Mammary epithelial cell (primary cell): ENCODE measurements at regions of chr22 and their contacts with region 1.

Region 1: DNA sequence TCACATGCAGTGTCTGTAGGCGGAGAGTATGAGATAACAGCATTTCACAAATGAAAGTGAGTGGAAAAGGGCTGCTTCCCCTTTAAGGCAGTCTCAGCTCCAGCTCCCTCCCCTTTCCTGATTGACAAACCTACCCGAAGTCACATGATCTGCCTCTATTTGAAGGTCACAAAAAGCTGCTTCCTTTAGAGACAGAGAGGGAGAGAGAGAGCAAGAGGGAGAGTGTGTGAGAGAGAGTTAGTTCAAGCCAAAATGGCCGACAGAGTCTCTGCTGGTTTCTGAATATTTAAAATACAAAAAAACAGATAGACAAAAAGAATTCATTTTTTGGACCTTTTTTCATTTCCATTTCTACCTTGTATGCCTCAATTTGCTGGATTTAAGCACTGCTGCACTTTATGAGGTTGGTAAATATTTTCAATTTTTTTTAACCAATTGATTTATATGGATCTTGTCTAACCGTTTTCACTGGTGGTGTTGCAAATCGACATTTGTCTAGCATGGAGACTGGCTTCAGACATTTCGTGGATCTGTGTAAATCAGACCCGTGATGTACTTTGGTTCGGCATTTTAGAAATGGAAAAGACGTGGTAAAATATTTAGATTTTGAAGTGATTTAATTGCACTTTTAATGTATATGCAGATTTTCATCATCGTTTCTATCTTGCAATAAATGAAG is at the start of gene TNRC6B:
- DNase-seq: peak; percentile 97
- H3K4me3 ChIP-seq: peak within 1 kb of the TSS; percentile 53 to 100 (median 100)
- H3K27ac ChIP-seq: peak within 1 kb of the TSS; percentile 90
- H3K4me1 ChIP-seq: peaks cover 26% of the 10 kb centered on the region
- H3K27me3 ChIP-seq: no peaks in the 10 kb centered on the region
- CTCF ChIP-seq: no peak
- total RNA-seq, gene TNRC6B: 25.2 to 27.3 TPM

Region 2: DNA sequence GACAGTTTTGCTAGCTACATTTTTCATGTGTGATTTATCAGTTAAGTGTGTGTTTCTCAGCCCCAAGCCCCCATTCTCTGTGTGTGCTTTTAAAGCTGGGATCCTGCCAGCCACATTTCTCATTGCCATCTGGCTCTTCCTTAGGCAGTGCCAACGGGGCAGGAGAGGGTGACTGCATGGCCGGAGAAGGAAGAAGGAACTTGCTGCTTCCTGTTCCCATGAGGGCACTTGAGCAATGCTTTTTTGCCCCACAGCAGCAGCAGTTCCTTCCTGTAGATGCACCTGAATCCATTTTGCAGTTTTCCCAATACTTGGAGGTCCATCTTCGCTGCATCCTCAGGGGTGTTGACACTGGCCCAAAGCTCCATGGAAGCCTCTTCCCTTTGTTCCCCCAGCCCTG is 37.4 kb after region 1 on chr22:
- CTCF ChIA-PET with region 1: no interaction called
- dilution Hi-C with region 1: no loop called
- in situ Hi-C with region 1: no loop called
- intact Hi-C with region 1: no loop called
- DNase-seq: no peak
- H3K4me3 ChIP-seq: no peak overlapping the region
- H3K27ac ChIP-seq: no peak overlapping the region
- H3K4me1 ChIP-seq: peaks cover 9% of the 10 kb centered on the region
- H3K27me3 ChIP-seq: no peaks in the 10 kb centered on the region
- CTCF ChIP-seq: no peak

Region 3: DNA sequence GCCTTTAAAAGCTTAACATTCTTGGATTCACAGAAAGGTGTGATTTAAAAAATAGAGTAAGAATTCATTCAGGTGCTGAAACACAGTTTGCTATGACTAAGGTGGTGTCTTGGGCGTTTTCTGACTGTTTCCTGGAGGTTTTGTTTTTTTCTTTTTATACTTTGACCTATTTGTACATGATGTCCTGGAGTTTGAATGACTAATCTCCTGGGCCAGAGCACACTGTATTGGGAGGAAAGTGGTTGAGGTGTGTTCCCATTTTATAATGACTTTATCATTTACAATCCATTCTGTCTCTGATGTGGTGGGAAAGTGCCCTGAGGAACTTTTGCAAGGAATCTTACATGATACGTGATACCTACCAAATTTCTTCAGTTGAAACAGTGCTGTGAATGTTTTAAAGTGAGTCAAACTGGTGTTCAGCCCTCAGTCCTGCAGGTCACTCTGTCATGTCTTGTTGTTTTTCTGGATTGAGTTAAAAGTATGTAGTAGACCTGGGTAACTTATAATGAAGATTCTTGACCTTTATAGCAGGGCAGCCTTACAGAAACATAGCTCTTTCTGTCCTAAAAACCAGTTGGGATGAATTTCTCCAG is 80.7 kb after region 1 on chr22:
- CTCF ChIA-PET with region 1: no interaction called
- dilution Hi-C with region 1: no loop called
- in situ Hi-C with region 1: no loop called
- intact Hi-C with region 1: loop called (anchors 1 kb)
- DNase-seq: peak; percentile 98
- H3K4me3 ChIP-seq: no peak overlapping the region
- H3K27ac ChIP-seq: peak overlapping the region; percentile 88
- H3K4me1 ChIP-seq: peaks cover 29% of the 10 kb centered on the region
- H3K27me3 ChIP-seq: no peaks in the 10 kb centered on the region
- CTCF ChIP-seq: no peak

Region 4: GRCh38 chr22:40276996-40277823 is 99.3 kb after region 1 on chr22:
- CTCF ChIA-PET with region 1: no interaction called
- dilution Hi-C with region 1: no loop called
- in situ Hi-C with region 1: no loop called
- intact Hi-C with region 1: loop called (anchors 5 kb)
- DNase-seq: peak; percentile 27
- H3K4me3 ChIP-seq: peak overlapping the region; percentile 22 to 77 (median 29)
- H3K27ac ChIP-seq: peak overlapping the region; percentile 61
- H3K4me1 ChIP-seq: peaks cover 22% of the 10 kb centered on the region
- H3K27me3 ChIP-seq: no peaks in the 10 kb centered on the region
- CTCF ChIP-seq: no peak

Region 5: GRCh38 chr22:40400159-40400558 is 222.3 kb after region 1 on chr22:
- CTCF ChIA-PET with region 1: no interaction called
- dilution Hi-C with region 1: no loop called
- in situ Hi-C with region 1: no loop called
- intact Hi-C with region 1: no loop called
- DNase-seq: no peak
- H3K4me3 ChIP-seq: no peak overlapping the region
- H3K27ac ChIP-seq: no peak overlapping the region
- H3K4me1 ChIP-seq: no peaks in the 10 kb centered on the region
- H3K27me3 ChIP-seq: no peaks in the 10 kb centered on the region
- CTCF ChIP-seq: no peak